GM12878 (cell line): ENCODE measurements at regions of chr2 and their contacts with region 1.

Region 1: GRCh38 chr2:64101141-64101591 is 43.1 kb downstream of the PELI1 start:
- DNase-seq: no peak
- ATAC-seq: peak; percentile 68
- H3K4me3 ChIP-seq: peak overlapping the region; percentile 26; the same call in 1 of the 2 replicates
- H3K27ac ChIP-seq: peak overlapping the region; percentile 80
- H3K4me1 ChIP-seq: peaks cover 46% of the 10 kb centered on the region
- H3K27me3 ChIP-seq: no peaks in the 10 kb centered on the region
- CTCF ChIP-seq: no peak
- EP300 ChIP-seq: no peak
- POLR2A ChIP-seq: no peak
- RAD21 ChIP-seq: no peak

Region 2: GRCh38 chr2:64029116-64029665 is 72.0 kb before region 1 on chr2:
- CTCF ChIA-PET with region 1: no interaction called
- POLR2A ChIA-PET with region 1: no interaction called
- RAD21 ChIA-PET with region 1: no interaction called
- SMC1A ChIA-PET with region 1: no interaction called
- in situ Hi-C with region 1: no loop called
- intact Hi-C with region 1: no loop called
- DNase-seq: no peak
- ATAC-seq: no peak
- H3K4me3 ChIP-seq: no peak overlapping the region
- H3K27ac ChIP-seq: no peak overlapping the region
- H3K4me1 ChIP-seq: 0 out of 2 replicates have a peak, but pooled peaks cover 3% of the 10 kb centered on the region
- H3K27me3 ChIP-seq: no peaks in the 10 kb centered on the region
- CTCF ChIP-seq: no peak
- EP300 ChIP-seq: no peak
- POLR2A ChIP-seq: no peak
- RAD21 ChIP-seq: no peak

Region 3: GRCh38 chr2:64114063-64114911 is 13.1 kb after region 1 on chr2:
- CTCF ChIA-PET with region 1: interaction called, 10 read pairs
- POLR2A ChIA-PET with region 1: interaction called, 11 read pairs
- RAD21 ChIA-PET with region 1: interaction called, 11 read pairs
- SMC1A ChIA-PET with region 1: interaction called, 495 read pairs
- in situ Hi-C with region 1: no loop called
- intact Hi-C with region 1: no loop called
- DNase-seq: peak; percentile 56
- ATAC-seq: peak; percentile 65
- H3K4me3 ChIP-seq: peak overlapping the region; percentile 28; the same call in 1 of the 2 replicates
- H3K27ac ChIP-seq: peak overlapping the region; percentile 72
- H3K4me1 ChIP-seq: peaks cover 50% of the 10 kb centered on the region
- H3K27me3 ChIP-seq: no peaks in the 10 kb centered on the region
- CTCF ChIP-seq: no peak
- EP300 ChIP-seq: peak; percentile 59 to 82; a peak in 3 of 4 replicates
- POLR2A ChIP-seq: no peak
- RAD21 ChIP-seq: no peak

Region 4: DNA sequence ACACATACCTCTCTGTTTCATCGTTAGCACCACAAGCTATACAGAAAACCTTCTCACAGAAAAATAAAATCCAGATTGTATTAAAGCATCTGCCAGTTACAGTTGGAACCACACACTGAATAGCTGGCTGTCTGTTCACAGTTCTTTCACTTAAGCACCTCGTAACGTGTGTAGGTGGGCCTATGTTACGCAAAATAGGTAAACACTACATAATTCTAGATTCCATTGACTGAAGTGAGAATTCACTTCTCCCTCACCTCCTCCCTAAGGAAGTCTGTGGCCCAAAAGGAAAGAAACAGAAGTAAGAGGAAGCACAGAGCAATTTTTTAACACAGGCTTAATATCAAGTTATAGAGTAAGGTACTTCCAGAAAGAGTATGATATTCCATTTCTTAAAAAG is 18.2 kb after region 1 on chr2:
- CTCF ChIA-PET with region 1: interaction called, 10 read pairs
- POLR2A ChIA-PET with region 1: interaction called, 17 read pairs
- RAD21 ChIA-PET with region 1: interaction called, 11 read pairs
- SMC1A ChIA-PET with region 1: interaction called, 495 read pairs
- in situ Hi-C with region 1: no loop called
- intact Hi-C with region 1: no loop called
- DNase-seq: no peak
- ATAC-seq: no peak
- H3K4me3 ChIP-seq: no peak overlapping the region
- H3K27ac ChIP-seq: no peak overlapping the region; the same call in 1 of the 2 replicates
- H3K4me1 ChIP-seq: peaks cover 32% of the 10 kb centered on the region
- H3K27me3 ChIP-seq: no peaks in the 10 kb centered on the region
- CTCF ChIP-seq: no peak
- EP300 ChIP-seq: no peak
- POLR2A ChIP-seq: no peak
- RAD21 ChIP-seq: no peak

Region 5: GRCh38 chr2:64124571-64124970 is 23.4 kb after region 1 on chr2:
- CTCF ChIA-PET with region 1: interaction called, 10 read pairs
- POLR2A ChIA-PET with region 1: interaction called, 17 read pairs
- RAD21 ChIA-PET with region 1: interaction called, 53 read pairs
- SMC1A ChIA-PET with region 1: interaction called, 495 read pairs
- in situ Hi-C with region 1: no loop called
- intact Hi-C with region 1: no loop called
- DNase-seq: no peak
- ATAC-seq: peak; percentile 9; the same call in 1 of the 3 replicates
- H3K4me3 ChIP-seq: no peak overlapping the region
- H3K27ac ChIP-seq: no peak overlapping the region
- H3K4me1 ChIP-seq: peaks cover 15% of the 10 kb centered on the region; the same call in 1 of the 2 replicates
- H3K27me3 ChIP-seq: no peaks in the 10 kb centered on the region
- CTCF ChIP-seq: no peak
- EP300 ChIP-seq: no peak
- POLR2A ChIP-seq: no peak
- RAD21 ChIP-seq: no peak

Region 6: DNA sequence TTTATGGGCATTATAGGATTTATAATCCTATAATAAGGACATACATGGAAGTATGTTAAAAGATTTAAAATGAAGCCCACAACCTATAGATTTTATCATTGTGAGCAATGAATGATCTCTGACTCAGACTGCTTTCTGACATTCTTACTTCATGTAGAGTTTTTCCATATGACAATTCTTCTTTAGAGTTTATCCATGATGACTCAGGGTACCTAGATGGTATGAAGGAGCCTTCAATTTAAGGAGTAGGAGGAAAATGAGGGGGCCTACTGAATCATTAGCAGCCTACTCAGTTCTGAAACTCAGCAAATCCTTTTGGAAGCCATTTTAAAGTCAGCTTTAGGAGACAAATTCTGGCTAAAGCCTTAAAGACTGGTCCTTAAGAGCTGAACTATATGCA is 32.7 kb after region 1 on chr2:
- CTCF ChIA-PET with region 1: interaction called, 10 read pairs
- POLR2A ChIA-PET with region 1: interaction called, 6 read pairs
- RAD21 ChIA-PET with region 1: interaction called, 53 read pairs
- SMC1A ChIA-PET with region 1: interaction called, 495 read pairs
- in situ Hi-C with region 1: no loop called
- intact Hi-C with region 1: no loop called
- DNase-seq: no peak
- ATAC-seq: no peak
- H3K4me3 ChIP-seq: no peak overlapping the region
- H3K27ac ChIP-seq: no peak overlapping the region; the same call in 1 of the 2 replicates
- H3K4me1 ChIP-seq: peaks cover 46% of the 10 kb centered on the region
- H3K27me3 ChIP-seq: no peaks in the 10 kb centered on the region
- CTCF ChIP-seq: no peak
- EP300 ChIP-seq: no peak
- POLR2A ChIP-seq: no peak
- RAD21 ChIP-seq: no peak

Region 7: GRCh38 chr2:64318476-64318748 is 217.2 kb after region 1 on chr2:
- CTCF ChIA-PET with region 1: interaction called, 11 read pairs
- POLR2A ChIA-PET with region 1: interaction called, 5 read pairs
- RAD21 ChIA-PET with region 1: interaction called, 11 read pairs
- SMC1A ChIA-PET with region 1: interaction called, 13 read pairs
- in situ Hi-C with region 1: no loop called
- intact Hi-C with region 1: no loop called
- DNase-seq: no peak
- ATAC-seq: peak; percentile 83
- H3K4me3 ChIP-seq: no peak overlapping the region
- H3K27ac ChIP-seq: no peak overlapping the region
- H3K4me1 ChIP-seq: peaks cover 13% of the 10 kb centered on the region
- H3K27me3 ChIP-seq: no peaks in the 10 kb centered on the region
- CTCF ChIP-seq: no peak
- EP300 ChIP-seq: 0 out of 4 replicates have a peak, but pooled peaks of 1 of the 2 experiments have one; percentile 13
- POLR2A ChIP-seq: no peak
- RAD21 ChIP-seq: no peak